ENCODE measurements at regions of chr3 and their contacts with region 1.

Region 1: GRCh38 chr3:112303764-112304325 is 9.8 kb upstream of the SLC9C1 start:
- DNase-seq: peak; percentile 20
- ATAC-seq: peak; percentile 88
- H3K4me3 Mint-ChIP-seq: no peak overlapping the region
- H3K27ac Mint-ChIP-seq: no peak overlapping the region
- H3K4me1 Mint-ChIP-seq: peaks cover 7% of the 10 kb centered on the region
- H3K27me3 Mint-ChIP-seq: no peaks in the 10 kb centered on the region
- CTCF ChIP-seq: no peak

Region 2: DNA sequence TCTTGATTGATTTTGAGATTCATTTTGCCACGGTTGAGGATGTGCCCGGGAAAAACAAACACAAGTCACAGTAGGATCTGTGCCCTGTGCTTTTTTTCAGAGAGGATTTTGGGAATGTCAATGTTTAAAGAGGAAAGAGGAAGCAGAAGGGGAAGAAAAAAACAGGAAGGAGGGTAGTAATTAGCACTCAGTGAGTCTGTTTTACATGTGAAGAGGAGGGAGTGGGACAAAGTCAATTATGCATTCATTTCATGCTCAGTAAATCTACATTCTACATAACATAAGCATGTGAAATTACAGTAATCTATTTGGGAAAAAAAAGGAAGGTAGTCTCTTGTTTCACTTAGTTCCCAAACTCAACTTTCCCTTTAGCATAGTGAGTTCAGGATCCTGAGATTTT is 10.8 kb after region 1 on chr3:
- CTCF ChIA-PET with region 1: interaction called, 10 read pairs
- POLR2A ChIA-PET with region 1: no interaction called
- intact Hi-C with region 1: no loop called
- DNase-seq: no peak
- ATAC-seq: no peak
- H3K4me3 Mint-ChIP-seq: no peak overlapping the region
- H3K27ac Mint-ChIP-seq: no peak overlapping the region
- H3K4me1 Mint-ChIP-seq: peaks cover 8% of the 10 kb centered on the region
- H3K27me3 Mint-ChIP-seq: no peaks in the 10 kb centered on the region
- CTCF ChIP-seq: no peak

Region 3: DNA sequence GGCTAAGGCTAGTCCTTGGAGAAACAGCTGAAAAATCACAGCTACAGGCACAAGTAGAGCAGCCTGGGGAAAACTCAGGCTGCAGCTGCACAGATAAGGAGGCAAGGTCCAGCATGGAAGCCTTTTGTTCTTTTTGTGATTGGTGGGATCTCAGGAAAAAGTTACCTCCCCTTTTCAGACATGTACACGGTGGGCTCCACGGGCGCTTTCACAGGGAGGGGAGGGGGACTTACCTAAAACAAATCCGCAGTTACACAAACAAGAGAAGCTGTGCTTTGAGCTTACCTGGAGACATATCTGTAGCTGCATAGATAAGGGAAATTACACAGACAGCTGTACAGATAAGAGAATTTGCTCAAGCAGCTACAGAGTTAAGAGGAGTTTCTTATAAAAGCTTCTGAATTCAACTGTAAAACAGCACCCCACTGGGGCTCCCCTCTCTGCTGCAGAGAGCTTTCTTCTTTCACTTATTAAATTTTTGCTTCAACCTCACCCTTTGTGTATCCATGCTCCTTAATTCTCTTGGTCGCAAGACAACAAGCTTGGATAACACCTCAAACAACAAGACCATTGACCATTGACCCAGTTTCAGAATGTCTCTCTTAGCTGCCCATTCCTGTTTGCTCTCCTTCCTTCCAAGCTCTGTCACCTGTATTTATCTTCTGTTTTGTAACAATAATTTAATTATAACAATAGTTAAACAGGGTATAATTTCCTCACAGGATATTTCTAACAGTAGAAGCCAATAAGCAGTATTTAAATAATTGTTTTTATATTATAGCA is 18.2 kb after region 1 on chr3:
- CTCF ChIA-PET with region 1: no interaction called
- POLR2A ChIA-PET with region 1: no interaction called
- intact Hi-C with region 1: loop called (anchors 2 kb)
- DNase-seq: no peak
- ATAC-seq: no peak
- H3K4me3 Mint-ChIP-seq: no peak overlapping the region
- H3K27ac Mint-ChIP-seq: no peak overlapping the region
- H3K4me1 Mint-ChIP-seq: no peaks in the 10 kb centered on the region
- H3K27me3 Mint-ChIP-seq: no peaks in the 10 kb centered on the region
- CTCF ChIP-seq: no peak

Measured in activated B cell treated with CpG ODN at 0.5 μM for 24 hours (primary cell).